Body of pancreas (tissue), 4 donors: ENCODE measurements at regions of chr4 and their contacts with region 1.

Region 1: DNA sequence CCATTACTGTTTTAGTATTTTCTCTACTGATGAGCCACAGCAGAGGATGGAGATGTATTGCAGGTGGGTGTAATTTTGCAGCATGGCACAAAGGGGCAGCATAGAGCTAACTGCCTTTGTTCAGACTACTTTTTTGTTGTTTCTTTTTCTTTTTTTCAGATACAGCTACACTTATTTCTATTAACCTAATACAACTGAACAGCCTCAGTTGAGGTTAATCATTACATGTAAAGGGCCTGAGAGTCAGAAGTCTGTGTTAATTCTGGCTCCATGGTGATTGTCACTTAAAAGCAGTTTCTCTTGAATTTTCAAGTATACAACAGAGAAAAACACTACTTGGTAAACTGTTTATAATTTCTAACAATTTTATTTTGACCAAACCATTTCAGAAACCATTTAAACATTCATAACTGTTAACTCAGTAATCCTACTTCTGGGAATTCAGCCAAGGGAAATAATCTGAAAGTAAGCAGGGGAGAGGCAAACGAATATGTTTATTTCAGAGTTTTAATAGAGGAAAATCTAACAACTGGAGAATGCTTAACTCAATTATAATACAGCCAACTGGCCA is 13.9 kb upstream of the PPEF2 start:
- DNase-seq: peak; percentile 29 to 52 (median 45)
- ATAC-seq: peak; percentile 90
- H3K4me3 ChIP-seq: no peak overlapping the region
- H3K27ac ChIP-seq: peak overlapping the region in 3 of 4 donors; percentile 50 to 65 (median 51)
- H3K4me1 ChIP-seq: peaks cover 7% of the 10 kb centered on the region
- H3K27me3 ChIP-seq: no peaks in the 10 kb centered on the region
- CTCF ChIP-seq: peak; percentile 72 to 91 (median 83)
- POLR2A ChIP-seq: no peak

Region 2: GRCh38 chr4:76074468-76074867 is 158.3 kb after region 1 on chr4 and contains the start of gene ART3:
- intact Hi-C with region 1: loop called (anchors 10 kb)
- DNase-seq: no peak
- ATAC-seq: no peak
- H3K4me3 ChIP-seq: no peak within 1 kb of the TSS
- H3K27ac ChIP-seq: no peak within 1 kb of the TSS
- H3K4me1 ChIP-seq: no peaks in the 10 kb centered on the region
- H3K27me3 ChIP-seq: no peaks in the 10 kb centered on the region
- CTCF ChIP-seq: no peak
- POLR2A ChIP-seq: no peak
- total RNA-seq, gene ART3: 6.5 to 6.9 TPM